PC-3 (cell line): ENCODE measurements at regions of chr4 and their contacts with region 1.

Region 1: DNA sequence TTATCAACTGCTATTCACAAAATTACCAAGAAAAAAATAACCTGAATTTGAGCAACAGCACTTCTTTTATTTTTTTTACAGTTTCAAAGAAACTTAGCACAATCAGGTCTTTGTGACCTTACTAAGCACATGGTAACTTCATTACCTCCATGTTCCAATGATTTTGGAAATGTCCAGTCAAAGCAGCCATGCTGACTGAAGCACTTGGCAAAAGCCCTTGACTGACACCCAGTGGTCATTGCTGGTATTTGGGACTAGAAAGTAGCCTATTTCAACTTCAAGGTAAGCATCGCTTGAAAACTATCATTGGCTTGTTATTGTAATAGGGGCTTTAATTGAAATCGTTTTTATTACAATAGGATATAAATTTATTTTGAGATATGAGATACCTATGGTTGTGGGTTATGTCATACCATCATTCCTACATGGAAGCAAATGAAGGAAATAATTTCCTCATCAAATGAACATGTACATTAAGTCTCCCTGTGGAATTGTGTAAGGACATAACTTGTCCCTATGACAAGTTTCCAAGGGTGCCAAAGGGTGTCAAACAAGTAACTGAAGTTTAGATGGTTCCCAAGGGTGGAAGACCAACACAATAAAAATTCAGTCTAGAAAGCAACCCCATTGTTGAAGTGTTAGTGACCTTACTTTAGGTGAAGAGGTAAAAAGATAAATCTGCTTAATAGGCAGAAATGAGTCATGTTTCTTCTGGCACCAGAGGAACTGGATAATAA is 15.2 kb upstream of the ANXA10 start:
- DNase-seq: peak; percentile 85
- ATAC-seq: peak; percentile 76
- H3K4me3 ChIP-seq: no peak overlapping the region
- H3K27ac ChIP-seq: peak overlapping the region; percentile 75
- H3K4me1 ChIP-seq: peaks cover 16% of the 10 kb centered on the region
- H3K27me3 ChIP-seq: no peaks in the 10 kb centered on the region
- CTCF ChIP-seq: peak; percentile 86

Region 2: DNA sequence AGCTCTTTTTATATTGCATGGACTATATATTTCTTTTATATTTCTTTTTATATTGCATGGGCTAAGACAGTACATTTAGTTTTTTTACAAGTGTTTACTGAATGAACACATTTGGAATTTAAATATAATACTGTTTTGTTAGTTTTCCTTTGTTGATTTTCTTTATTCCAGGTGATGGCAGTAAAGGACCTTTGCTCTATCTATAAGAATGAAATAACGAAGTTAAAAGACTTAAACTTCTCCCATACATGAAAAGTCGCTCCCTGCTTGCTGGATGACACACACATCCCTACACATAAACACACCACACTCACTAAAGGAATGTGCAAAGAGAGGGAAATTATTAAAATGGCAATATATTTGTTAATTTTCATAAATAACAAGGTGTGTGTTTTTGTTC is 87.3 kb before region 1 on chr4:
- CTCF ChIA-PET with region 1: no interaction called
- POLR2A ChIA-PET with region 1: no interaction called
- intact Hi-C with region 1: loop called (anchors 1 kb)
- DNase-seq: peak; percentile 48
- ATAC-seq: peak; percentile 68
- H3K4me3 ChIP-seq: no peak overlapping the region
- H3K27ac ChIP-seq: no peak overlapping the region
- H3K4me1 ChIP-seq: no peaks in the 10 kb centered on the region
- H3K27me3 ChIP-seq: no peaks in the 10 kb centered on the region
- CTCF ChIP-seq: peak; percentile 54

Region 3: DNA sequence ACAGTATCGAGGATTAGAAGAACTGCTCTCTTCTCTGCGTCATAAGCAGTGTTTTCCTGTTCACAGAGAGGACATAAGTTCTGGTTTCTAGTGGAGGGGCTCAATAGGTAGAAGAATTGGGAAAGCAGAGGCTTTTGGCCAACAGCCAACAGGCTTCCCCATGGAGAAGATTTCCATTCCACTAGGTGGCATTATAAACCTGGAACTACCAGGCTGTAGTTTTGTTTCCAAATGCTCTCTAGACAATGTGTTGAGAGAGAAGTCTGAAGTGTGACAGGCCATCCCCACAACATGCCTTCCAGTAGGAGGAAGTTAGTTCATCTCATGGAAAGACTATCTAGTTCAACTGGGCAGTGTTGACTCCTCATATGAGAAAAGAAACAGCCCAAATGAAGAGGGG is 48.6 kb before region 1 on chr4:
- CTCF ChIA-PET with region 1: no interaction called
- POLR2A ChIA-PET with region 1: no interaction called
- intact Hi-C with region 1: loop called (anchors 1 kb)
- DNase-seq: peak; percentile 63
- ATAC-seq: peak; percentile 57
- H3K4me3 ChIP-seq: peak overlapping the region; percentile 11; the same call in 1 of the 2 replicates
- H3K27ac ChIP-seq: peak overlapping the region; percentile 45
- H3K4me1 ChIP-seq: peaks cover 9% of the 10 kb centered on the region
- H3K27me3 ChIP-seq: no peaks in the 10 kb centered on the region
- CTCF ChIP-seq: peak; percentile 63

Region 4: DNA sequence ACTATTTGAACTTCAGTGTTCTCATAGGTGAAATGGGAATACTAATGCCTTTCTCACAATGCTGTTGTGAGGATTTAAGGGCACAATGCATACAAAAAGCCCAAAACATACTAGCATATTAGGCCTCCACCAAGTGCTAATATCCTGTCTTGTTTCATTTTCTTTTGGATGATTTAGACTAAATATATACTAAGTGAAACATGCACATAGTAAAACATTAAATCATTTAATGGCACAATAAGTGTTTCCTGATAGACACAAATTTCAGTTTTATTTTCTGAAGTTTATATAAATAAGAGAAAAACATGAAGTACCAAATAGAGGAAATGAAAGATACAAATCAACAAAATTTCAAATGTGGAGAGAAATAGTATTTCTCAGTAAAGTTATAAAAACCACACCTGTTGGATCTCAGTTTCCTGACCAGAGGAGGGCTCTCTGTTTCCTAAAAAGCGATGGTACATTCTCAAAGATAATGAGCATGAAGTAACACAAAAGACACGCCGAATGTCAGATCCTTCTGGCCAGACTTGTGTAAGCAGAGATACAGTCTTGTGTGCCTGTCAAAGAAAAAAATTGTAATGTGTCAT is 216.3 kb after region 1 on chr4:
- CTCF ChIA-PET with region 1: no interaction called
- POLR2A ChIA-PET with region 1: no interaction called
- intact Hi-C with region 1: no loop called
- DNase-seq: no peak
- ATAC-seq: no peak
- H3K4me3 ChIP-seq: no peak overlapping the region
- H3K27ac ChIP-seq: no peak overlapping the region
- H3K4me1 ChIP-seq: no peaks in the 10 kb centered on the region
- H3K27me3 ChIP-seq: no peaks in the 10 kb centered on the region
- CTCF ChIP-seq: no peak